OCI-LY7 (cell line): ENCODE measurements at regions of chr1 and their contacts with region 1.

Region 1: DNA sequence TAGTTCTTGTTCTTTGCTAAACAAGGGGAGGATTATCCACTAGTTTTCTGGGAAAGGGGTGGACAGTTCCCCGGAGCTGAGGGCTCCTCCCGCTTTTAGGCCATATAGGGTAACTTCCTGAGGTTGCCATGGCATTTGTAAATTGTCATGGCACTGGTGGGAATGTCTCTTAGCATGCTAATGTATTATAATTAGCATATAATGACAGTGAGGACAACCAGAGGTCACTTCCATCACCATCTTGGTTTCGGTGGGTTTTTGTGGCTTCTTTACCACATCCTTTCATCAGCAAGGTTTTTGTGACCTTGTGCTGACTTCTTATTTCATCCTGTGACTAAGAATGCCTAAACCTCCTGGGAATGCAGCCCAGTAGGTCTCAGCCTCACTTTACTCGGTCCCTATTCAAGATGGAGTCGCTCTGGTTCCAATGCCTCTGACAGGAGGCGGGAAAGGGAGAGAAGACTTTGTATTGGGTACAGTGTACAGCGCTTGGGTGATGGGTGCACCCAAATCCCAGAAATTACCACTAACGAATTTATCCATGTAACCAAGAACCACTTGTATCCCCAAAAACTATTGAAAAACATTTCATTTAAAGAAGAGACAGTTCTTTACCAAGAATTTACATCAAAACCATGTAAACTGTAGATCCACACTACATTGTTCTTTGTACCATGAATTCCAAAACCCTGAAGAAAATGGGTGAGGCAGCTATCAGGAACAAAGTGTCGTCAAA is 8.7 kb upstream of the SLC2A5 start:
- DNase-seq: peak; percentile 63
- H3K4me3 ChIP-seq: peak overlapping the region; percentile 1
- H3K27ac ChIP-seq: peak overlapping the region; percentile 100
- H3K4me1 ChIP-seq: peaks cover 100% of the 10 kb centered on the region
- CTCF ChIP-seq: no peak

Region 2: GRCh38 chr1:8817406-8818324 is 260.5 kb before region 1 on chr1 and contains the start of gene RERE:
- CTCF ChIA-PET with region 1: no interaction called
- POLR2A ChIA-PET with region 1: no interaction called
- intact Hi-C with region 1: loop called (anchors 5 kb)
- DNase-seq: peak; percentile 96
- H3K4me3 ChIP-seq: peak within 1 kb of the TSS; percentile 89
- H3K27ac ChIP-seq: peak within 1 kb of the TSS; percentile 86
- H3K4me1 ChIP-seq: peaks cover 43% of the 10 kb centered on the region
- CTCF ChIP-seq: 0 out of 2 replicates have a peak, but pooled peaks have one; percentile 15
- total RNA-seq, gene RERE: 73.1 and 81.5 TPM in 2 replicates

Region 3: DNA sequence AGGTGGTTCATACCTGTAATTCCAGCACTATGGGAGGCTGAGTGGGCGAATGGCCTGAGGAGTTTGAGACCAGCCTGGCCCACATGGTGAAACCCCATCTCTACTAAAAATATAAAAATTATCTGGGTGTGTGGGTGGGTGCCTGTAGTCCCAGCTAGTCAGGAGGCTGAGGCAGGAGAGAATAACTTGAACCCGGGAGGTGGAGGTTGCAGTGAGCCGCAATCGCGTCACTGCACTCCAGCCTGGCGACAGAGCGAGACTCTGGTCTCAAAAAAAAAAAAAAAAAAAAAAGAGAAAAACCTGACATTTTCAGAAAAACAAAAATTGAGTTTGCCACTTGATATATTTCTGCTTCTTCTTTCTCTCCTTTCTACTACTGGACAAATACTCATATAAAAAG is 108.2 kb before region 1 on chr1:
- CTCF ChIA-PET with region 1: no interaction called
- POLR2A ChIA-PET with region 1: no interaction called
- intact Hi-C with region 1: no loop called
- DNase-seq: no peak
- H3K4me3 ChIP-seq: no peak overlapping the region
- H3K27ac ChIP-seq: no peak overlapping the region
- H3K4me1 ChIP-seq: peaks cover 7% of the 10 kb centered on the region
- CTCF ChIP-seq: no peak

Region 4: DNA sequence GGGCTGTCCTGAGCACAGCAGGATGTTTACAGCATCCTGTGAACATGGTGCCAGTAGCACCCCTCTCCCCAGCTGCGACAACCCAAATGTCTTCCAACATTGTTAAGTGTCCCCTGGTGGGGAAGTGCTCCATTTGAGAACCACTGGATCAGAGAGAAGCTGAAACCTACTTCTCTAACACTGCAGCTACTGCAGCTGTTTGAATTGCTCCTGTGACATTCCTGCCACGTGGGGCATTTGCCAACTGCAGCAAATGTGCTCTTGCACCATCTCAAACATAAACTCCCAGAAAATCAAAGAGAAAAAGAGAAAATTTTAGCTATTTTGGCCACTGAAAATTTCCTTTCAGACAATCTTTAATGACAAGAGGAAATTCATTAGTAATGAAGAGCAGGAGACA is 19.7 kb before region 1 on chr1:
- CTCF ChIA-PET with region 1: interaction called, 3 read pairs
- POLR2A ChIA-PET with region 1: interaction called, 24 read pairs
- intact Hi-C with region 1: no loop called
- DNase-seq: no peak
- H3K4me3 ChIP-seq: no peak overlapping the region
- H3K27ac ChIP-seq: peak overlapping the region; percentile 29
- H3K4me1 ChIP-seq: peaks cover 44% of the 10 kb centered on the region
- CTCF ChIP-seq: no peak

Region 5: DNA sequence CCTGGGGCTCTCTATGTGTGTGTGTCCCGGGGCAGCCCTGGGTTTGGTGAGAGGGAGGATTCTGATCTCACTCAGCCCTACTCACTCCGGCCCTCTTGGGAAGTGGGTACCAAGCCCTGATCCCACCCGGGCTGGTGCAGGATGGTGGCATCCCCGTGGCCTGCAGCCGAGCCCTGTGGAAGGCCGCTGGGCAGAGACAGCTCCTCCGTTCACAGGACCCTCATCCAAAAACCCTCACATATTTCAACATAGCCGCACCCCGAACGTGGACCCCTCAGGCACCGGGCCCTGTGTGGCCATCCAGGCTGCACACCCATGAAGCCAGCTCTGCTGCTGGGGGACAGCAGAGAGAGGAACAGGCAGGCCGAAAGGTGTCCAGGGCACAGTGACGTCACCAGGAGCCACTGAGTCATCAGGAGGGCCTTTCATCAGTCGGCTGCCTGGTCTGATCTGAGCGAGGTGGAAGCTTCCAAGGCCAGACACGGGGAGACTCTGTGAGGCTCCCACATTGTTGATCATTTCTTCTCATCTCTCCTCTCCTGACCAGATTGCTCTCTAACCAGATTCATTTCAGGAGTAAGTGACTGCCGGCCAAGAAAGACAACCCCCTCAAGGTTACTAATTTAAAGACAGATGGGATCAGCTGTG is 67.0 kb after region 1 on chr1:
- CTCF ChIA-PET with region 1: no interaction called
- POLR2A ChIA-PET with region 1: no interaction called
- intact Hi-C with region 1: no loop called
- DNase-seq: no peak
- H3K4me3 ChIP-seq: no peak overlapping the region
- H3K27ac ChIP-seq: no peak overlapping the region
- H3K4me1 ChIP-seq: no peaks in the 10 kb centered on the region
- CTCF ChIP-seq: no peak